AG04449 (cell line): ENCODE measurements at regions of chr19 and their contacts with region 1.

Region 1: DNA sequence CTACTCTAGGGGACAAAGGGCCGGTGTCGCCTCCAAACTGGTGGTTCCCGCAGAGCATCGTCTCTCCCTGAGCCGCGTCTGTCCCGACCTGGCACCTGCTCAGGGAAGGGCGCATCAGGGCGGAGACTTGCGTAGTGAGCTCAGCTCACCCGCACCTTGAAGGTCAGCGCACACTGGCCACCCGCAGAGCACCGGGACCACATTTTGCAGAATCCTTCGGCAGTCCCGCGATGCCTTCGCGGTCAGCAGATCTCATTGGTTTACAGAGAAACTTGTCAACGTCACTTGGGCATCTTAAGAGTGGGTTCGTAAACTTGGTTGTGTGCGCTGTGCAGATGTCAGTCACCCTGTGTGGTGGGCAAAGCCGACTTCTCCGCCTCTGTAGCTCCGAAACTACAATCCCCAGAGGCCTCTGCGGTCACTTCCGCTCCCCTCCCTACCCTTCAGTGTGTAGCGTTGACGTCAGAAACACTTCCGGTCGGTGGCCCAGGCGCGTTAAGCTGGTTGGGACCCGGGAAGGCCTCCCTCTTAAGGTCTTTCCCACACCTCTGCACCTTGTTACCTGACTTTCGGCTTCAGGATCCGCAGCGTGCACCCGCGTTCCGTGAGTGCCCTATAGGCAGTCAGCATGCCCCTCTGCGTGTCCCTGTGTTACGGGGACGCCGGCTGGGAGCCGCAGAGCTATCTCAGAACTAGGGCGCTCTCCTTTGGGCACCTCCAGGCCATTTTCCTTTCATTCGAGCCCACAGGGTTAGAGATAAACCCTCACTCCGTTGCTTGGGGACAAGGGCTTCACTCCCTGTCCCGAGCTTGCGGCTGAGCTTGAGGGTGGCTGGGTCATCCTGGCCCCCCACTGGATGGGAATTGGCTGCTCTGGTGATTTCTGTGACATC is 36.5 kb upstream of the ZNF527 start:
- DNase-seq: peak; percentile 29
- H3K4me3 ChIP-seq: peak overlapping the region; percentile 93
- CTCF ChIP-seq: no peak

Region 2: DNA sequence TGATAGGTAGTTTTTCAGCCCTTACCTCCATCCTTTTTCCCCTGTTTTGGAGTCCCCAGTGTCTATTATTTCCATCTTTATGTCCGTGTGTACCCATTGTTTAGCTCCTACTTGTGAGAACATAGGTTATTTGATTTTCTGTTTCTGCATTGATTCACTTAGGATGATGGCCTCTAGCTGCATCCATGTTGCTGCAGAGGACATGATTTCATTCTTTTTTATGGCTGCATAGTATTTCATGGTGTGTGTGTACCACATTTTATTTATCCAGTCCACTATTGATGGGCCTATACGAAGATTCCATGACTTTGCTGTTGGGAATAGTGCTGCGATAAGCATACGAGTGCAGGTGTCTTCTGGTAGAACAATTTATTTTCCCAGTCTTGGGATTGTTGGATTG is 21.5 kb after region 1 on chr19:
- CTCF ChIA-PET with region 1: no interaction called
- POLR2A ChIA-PET with region 1: no interaction called
- DNase-seq: no peak
- H3K4me3 ChIP-seq: no peak overlapping the region
- CTCF ChIP-seq: no peak

Region 3: GRCh38 chr19:37370880-37371661 is 36.6 kb after region 1 on chr19 and contains the start of gene ZNF527:
- CTCF ChIA-PET with region 1: no interaction called
- POLR2A ChIA-PET with region 1: interaction called, 11 read pairs
- DNase-seq: peak; percentile 73
- H3K4me3 ChIP-seq: peak within 1 kb of the TSS; percentile 91
- CTCF ChIP-seq: no peak

Region 4: DNA sequence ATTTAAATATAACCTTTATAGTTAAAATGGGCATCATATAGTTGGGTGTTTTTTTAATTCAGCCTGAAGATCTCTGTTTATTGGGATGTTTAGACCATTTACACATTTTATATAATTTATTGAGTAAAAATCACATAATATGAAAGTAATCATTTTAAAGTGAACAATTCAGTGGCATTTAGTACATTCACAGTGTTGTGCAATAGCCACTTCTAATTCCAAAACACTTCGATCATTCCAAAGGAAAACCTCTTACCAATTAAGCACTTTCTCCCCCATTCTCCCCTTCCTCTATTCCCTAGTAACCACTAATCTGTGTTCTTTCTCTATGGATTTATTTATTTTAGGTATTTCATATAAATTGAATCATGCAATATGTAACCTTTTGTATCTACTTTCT is 66.7 kb after region 1 on chr19:
- CTCF ChIA-PET with region 1: no interaction called
- POLR2A ChIA-PET with region 1: no interaction called
- DNase-seq: no peak
- H3K4me3 ChIP-seq: no peak overlapping the region
- CTCF ChIP-seq: no peak